ENCODE measurements at regions of chr6 and their contacts with region 1.

Region 1: GRCh38 chr6:3258720-3259490 is at the start of gene PSMG4:
- DNase-seq: peak; percentile 87 to 97
- H3K4me3 ChIP-seq: peak within 1 kb of the TSS; percentile 93 to 100 (median 100)
- H3K27ac ChIP-seq: peak within 1 kb of the TSS; percentile 79 to 86
- H3K4me1 ChIP-seq: peaks cover 0 to 4% of the 10 kb centered on the region in 2 donors
- H3K27me3 ChIP-seq: no peaks in the 10 kb centered on the region
- CTCF ChIP-seq: no peak
- POLR2A ChIP-seq: no peak
- total RNA-seq, gene PSMG4: 24.3 to 26.9 (median 24.6) TPM

Region 2: DNA sequence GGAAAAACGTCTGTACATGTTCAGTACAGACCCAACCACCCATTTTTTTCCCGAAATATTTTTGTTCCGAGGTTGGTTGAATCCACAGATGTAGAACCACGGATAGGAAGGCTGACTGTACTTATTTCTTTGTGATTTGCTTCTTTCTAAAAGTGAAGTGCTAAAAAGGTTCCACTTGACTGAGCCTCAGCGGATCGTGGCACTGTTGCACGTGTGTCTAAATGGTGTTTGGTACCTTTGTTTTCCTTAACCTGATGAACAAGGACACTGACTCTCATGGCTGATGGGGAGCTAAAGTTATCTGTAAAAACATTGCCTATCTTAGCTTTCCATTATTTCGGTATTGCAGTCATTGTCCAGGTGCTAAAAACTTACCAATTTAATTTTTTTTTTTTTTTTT is 134.2 kb before region 1 on chr6:
- intact Hi-C with region 1: loop called (anchors 5 kb)
- DNase-seq: no peak
- H3K4me3 ChIP-seq: no peak overlapping the region
- H3K27ac ChIP-seq: no peak overlapping the region
- H3K4me1 ChIP-seq: no peaks in the 10 kb centered on the region
- H3K27me3 ChIP-seq: no peaks in the 10 kb centered on the region
- CTCF ChIP-seq: no peak
- POLR2A ChIP-seq: no peak

Region 3: DNA sequence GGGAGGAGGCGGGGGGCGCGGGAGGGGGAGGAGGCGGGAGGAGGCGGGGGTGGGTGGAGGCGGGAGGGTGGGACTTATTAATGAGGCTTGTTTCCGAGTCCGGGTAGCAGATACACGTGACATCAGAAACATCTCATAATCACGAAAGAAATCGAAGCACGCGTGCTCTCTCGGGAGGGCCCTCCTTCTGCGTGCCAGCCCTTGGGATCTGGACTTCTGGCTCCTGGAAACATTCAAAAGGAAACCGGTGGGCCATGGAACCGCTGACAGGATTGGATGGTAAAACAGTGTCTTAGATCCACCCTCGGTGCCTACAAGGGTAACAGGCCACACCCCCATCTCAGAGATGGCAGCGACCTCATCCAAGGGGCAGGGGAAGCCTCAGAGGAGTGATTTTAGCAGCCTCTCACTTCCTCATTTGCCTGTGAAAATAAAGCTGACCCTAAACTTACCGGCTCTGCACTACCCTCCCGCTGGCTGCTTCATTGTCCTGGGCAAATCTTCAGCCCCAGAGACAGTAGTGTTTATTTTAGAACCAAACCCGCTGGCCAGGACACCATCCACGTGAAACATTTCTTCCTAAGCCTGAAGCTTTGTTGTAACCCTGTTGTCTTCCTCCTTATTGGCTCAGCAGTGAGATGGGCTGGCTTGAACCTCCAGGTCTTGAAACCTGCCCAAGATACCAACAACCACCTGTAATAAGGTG is 97.3 kb after region 1 on chr6:
- intact Hi-C with region 1: no loop called
- DNase-seq: peak; percentile 64 to 87
- H3K4me3 ChIP-seq: peak overlapping the region; percentile 29 to 62 (median 47)
- H3K27ac ChIP-seq: peak overlapping the region; percentile 88 to 96
- H3K4me1 ChIP-seq: peaks cover 0 to 8% of the 10 kb centered on the region in 2 donors
- H3K27me3 ChIP-seq: no peaks in the 10 kb centered on the region
- CTCF ChIP-seq: no peak
- POLR2A ChIP-seq: no peak